ENCODE measurements at regions of chr4 and their contacts with region 1.

Region 1: DNA sequence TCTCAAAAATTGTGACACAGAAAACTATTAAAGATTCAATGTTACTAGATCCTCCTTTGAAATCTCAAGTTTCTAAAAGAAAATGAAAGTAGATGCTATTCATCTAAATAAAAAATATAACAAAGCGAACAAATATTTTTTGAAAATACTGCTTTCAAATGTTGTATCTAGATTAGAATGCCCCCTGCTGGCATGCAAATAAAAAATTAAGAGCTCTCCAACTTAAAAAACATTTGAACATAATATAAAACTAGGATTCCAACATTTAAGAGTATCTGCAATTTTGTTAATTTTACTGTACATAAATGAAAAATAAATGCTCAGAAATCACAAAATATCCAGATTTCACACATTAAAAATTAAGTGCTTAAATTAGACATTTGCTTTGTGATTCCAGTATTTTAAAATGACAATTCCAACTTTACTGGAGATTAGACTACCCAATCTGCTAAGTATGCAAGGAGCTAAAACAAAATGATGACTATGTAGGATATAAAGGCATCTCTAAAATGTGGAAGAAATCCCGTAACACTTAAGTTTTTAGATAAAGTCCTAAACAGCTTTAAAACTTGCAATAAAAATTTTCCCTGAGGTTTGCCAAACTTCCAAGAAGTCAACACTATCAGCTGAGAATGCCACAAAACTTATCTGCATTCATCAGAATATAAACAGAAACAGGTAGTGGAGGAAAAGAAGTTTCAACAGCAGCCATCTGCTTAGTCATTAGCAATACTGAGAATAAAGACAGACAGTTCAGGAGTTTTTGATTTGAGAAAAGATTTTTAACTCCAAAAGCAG is 32.7 kb downstream of the DHX15 start:
- DNase-seq: no peak
- H3K4me3 Mint-ChIP-seq: no peak overlapping the region
- H3K27ac Mint-ChIP-seq: no peak overlapping the region
- H3K4me1 Mint-ChIP-seq: peaks cover 48% of the 10 kb centered on the region
- H3K27me3 Mint-ChIP-seq: no peaks in the 10 kb centered on the region

Region 2: GRCh38 chr4:24472514-24473308 is 79.0 kb before region 1 on chr4:
- intact Hi-C with region 1: loop called (anchors 1 kb)
- DNase-seq: peak; percentile 43
- H3K4me3 Mint-ChIP-seq: peak overlapping the region; percentile 92
- H3K27ac Mint-ChIP-seq: peak overlapping the region; percentile 92
- H3K4me1 Mint-ChIP-seq: peaks cover 47% of the 10 kb centered on the region
- H3K27me3 Mint-ChIP-seq: peaks cover 62% of the 10 kb centered on the region

Region 3: GRCh38 chr4:24488399-24489164 is 63.1 kb before region 1 on chr4:
- intact Hi-C with region 1: loop called (anchors 5 kb)
- DNase-seq: peak; percentile 47
- H3K4me3 Mint-ChIP-seq: no peak overlapping the region
- H3K27ac Mint-ChIP-seq: no peak overlapping the region
- H3K4me1 Mint-ChIP-seq: no peaks in the 10 kb centered on the region
- H3K27me3 Mint-ChIP-seq: peaks cover 11% of the 10 kb centered on the region